AG04450 (cell line): ENCODE measurements at regions of chr6 and their contacts with region 1.

Region 1: GRCh38 chr6:11496152-11497060 is 41.1 kb upstream of the TMEM170B start:
- DNase-seq: peak; percentile 74
- H3K4me3 ChIP-seq: no peak overlapping the region
- H3K27ac ChIP-seq: no peak overlapping the region
- H3K27me3 ChIP-seq: no peaks in the 10 kb centered on the region
- CTCF ChIP-seq: peak; percentile 83

Region 2: GRCh38 chr6:11093589-11094410 is 402.6 kb before region 1 on chr6 and contains the start of gene SMIM13:
- CTCF ChIA-PET with region 1: interaction called, 28 read pairs
- POLR2A ChIA-PET with region 1: no interaction called
- DNase-seq: peak; percentile 96
- H3K4me3 ChIP-seq: peak within 1 kb of the TSS; percentile 99
- H3K27ac ChIP-seq: peak within 1 kb of the TSS; percentile 93
- H3K27me3 ChIP-seq: no peaks in the 10 kb centered on the region
- CTCF ChIP-seq: peak; percentile 30; the same call in 1 of the 2 replicates
- polyA plus RNA-seq, gene SMIM13: 8.0 and 9.0 TPM in 2 replicates

Region 3: DNA sequence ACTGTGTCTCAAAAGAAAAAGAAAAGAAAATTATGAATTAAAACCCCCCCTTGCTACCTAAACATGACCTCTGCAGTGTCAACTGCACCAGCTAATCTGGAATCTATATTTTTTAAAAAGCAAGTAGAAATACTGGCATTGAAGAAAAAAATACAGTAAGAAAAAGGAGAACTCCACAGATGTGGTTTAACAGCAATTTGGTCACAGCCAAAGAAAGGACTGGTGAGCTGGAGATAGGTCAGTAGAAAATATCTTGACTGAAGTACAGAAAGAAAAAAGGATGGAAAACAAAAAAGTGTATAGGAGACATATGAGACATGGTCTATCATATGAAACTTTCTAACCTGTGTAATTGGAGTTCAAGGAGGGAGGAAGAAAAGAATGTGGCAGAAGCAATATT is 340.8 kb before region 1 on chr6:
- CTCF ChIA-PET with region 1: interaction called, 139 read pairs
- POLR2A ChIA-PET with region 1: no interaction called
- DNase-seq: no peak
- H3K4me3 ChIP-seq: no peak overlapping the region
- H3K27ac ChIP-seq: no peak overlapping the region
- H3K27me3 ChIP-seq: no peaks in the 10 kb centered on the region
- CTCF ChIP-seq: no peak

Region 4: GRCh38 chr6:11232193-11232769 is 264.1 kb before region 1 on chr6 and contains the start of gene NEDD9:
- CTCF ChIA-PET with region 1: interaction called, 37 read pairs
- POLR2A ChIA-PET with region 1: no interaction called
- DNase-seq: peak; percentile 89
- H3K4me3 ChIP-seq: peak within 1 kb of the TSS; percentile 89
- H3K27ac ChIP-seq: peak within 1 kb of the TSS; percentile 84
- H3K27me3 ChIP-seq: no peaks in the 10 kb centered on the region
- CTCF ChIP-seq: no peak
- polyA plus RNA-seq, gene NEDD9: 7.2 and 10.9 TPM in 2 replicates

Region 5: GRCh38 chr6:11315743-11316438 is 180.5 kb before region 1 on chr6:
- CTCF ChIA-PET with region 1: interaction called, 15 read pairs
- POLR2A ChIA-PET with region 1: no interaction called
- DNase-seq: peak; percentile 62
- H3K4me3 ChIP-seq: no peak overlapping the region
- H3K27ac ChIP-seq: no peak overlapping the region
- H3K27me3 ChIP-seq: no peaks in the 10 kb centered on the region
- CTCF ChIP-seq: no peak

Region 6: DNA sequence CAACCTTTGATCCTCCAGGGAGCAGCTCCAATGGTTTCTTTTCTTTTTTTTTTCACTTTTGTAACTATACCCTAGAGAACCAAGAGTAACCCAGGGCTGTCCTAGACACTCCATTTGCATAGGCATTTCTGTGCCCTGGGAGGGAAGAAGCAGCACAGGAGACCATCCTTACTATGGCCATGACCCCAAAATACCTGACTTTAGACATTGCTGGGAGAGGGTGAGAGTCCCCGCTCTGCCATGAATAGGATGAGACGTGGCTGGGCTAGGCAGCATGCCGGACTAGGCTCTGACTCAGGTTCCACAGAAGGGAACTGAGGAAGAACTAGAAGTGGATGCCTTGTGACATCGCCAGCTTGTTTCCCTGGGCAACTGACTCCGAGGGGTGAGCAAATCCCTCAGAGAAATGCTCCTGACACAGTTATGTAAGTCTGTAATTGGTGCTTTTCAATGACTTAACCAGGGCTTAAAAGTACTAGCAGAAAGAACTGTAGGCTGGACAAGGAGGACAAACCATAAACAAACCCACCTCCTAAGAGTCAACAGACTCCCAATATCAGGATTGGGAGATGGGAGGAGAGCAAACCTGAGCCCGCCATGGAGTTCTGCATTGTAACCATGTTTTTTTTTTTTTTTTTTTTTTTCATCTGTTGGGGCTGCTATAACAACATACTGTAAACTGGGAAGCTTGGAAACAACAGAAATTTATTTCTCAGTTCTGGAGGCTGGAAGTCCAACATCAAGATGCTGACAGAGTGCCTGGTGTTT is 283.1 kb after region 1 on chr6:
- CTCF ChIA-PET with region 1: no interaction called
- POLR2A ChIA-PET with region 1: no interaction called
- DNase-seq: no peak
- H3K4me3 ChIP-seq: no peak overlapping the region
- H3K27ac ChIP-seq: no peak overlapping the region
- H3K27me3 ChIP-seq: no peaks in the 10 kb centered on the region
- CTCF ChIP-seq: no peak